ENCODE measurements at regions of chr2 and their contacts with region 1.

Region 1: DNA sequence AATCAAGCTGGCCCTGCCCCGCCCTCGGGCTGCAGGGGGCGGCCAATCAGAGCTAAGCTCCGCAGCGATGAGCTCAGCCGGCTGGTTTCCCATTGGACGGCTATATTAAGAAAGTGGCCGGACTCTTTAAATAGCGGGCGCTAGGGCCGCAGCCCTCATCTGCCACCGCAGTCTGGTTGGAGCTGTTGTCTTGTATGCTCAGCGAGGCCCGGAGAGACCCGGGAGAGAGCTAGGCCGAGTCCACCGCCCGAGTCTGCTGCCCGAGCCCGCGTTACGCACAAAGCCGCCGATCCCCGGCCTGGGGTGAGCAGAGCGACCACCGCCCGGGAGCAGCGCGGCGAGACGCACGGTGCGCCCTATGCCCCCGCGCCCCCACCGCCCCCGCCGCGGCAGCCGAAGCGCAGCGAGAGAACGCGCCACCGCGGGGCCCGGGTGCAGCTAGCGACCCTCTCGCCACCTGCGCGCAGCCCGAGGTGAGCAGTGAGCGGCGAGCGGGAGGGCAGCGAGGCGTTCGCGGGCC is at the start of gene RHOB:
- DNase-seq: peak; percentile 96 to 98
- H3K4me3 ChIP-seq: peak within 1 kb of the TSS; percentile 97
- H3K27ac ChIP-seq: peak within 1 kb of the TSS; percentile 69
- H3K4me1 ChIP-seq: peaks cover 52% of the 10 kb centered on the region
- H3K27me3 ChIP-seq: no peaks in the 10 kb centered on the region
- CTCF ChIP-seq: no peak
- total RNA-seq, gene RHOB: 39.3 and 44.4 TPM in 2 replicates

Region 2: DNA sequence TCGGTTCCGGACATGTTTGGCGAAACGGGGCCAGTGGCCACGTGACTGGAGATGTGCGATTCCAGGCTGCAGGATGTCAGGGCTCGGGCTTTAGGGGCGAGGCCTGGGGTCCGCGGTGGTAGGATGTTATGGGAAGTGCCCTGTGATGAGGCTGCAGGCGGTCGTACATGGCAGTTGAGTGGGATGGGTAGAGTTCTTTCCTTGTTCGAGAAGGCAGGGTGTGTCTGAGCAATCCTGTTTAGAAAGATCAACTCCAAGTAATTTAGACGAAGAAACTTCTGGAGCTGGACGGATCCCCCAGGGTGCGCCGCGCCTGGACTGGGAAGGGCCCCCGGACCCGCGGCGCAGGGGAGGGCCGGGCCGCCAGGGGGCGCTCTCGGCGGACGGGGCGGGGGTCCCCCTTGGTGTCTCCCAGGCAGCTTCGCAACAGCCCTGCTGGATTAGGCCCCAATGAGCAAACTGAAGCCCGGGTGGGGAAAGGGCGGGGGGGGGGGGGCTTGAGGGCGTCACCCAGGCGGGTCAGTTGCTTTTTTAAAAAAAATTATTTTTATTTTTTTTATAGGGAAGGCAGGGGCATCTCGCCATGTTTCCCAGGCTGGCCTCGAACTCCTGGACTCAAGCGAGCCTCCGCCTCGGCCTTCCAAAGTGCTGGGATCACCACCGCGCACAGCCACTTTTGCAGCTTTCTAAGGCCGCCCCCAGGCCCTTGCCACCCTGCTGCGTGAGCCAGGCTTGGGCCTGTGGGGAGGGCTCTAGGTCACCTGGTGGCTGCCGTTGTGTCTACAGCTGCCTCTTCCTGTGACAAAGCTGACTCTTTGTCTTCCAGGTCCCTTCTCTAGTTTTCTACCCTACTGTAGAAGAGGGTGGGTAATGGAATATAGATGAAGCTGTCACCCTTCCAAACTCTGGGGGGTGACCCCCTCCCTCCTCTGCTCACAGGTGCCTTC is 204.6 kb before region 1 on chr2:
- CTCF ChIA-PET with region 1: no interaction called
- POLR2A ChIA-PET with region 1: no interaction called
- intact Hi-C with region 1: no loop called
- DNase-seq: no peak
- H3K4me3 ChIP-seq: no peak overlapping the region
- H3K27ac ChIP-seq: no peak overlapping the region
- H3K4me1 ChIP-seq: no peaks in the 10 kb centered on the region
- H3K27me3 ChIP-seq: no peaks in the 10 kb centered on the region
- CTCF ChIP-seq: no peak

Region 3: DNA sequence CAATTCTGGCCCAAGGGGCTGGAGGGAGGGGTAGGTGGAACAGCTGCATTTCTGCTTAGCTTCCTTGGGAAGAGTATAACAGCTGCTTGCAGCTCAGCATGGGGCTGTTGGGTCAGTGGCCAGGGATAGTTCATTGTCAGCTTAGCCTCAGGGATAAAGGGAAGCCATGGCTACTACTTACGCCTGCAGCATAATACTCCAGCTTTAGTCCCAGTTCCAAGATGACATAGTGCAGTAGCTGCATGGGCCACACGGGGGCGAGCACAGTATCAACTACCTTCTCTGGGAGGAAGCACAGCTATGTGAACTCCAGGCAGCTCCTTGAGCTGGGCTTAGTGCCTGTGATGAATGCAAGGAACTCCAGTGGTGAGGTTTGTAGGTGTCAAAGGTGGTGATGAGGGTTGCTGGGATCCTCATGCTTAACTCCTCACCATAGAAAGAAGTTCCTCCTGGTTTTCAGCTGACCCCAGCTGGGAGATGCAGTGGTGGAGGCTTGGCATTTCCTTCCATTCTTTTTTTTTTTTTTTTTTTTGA is 35.5 kb before region 1 on chr2:
- CTCF ChIA-PET with region 1: interaction called, 13 read pairs
- POLR2A ChIA-PET with region 1: interaction called, 8 read pairs
- intact Hi-C with region 1: loop called (anchors 1 kb)
- DNase-seq: peak; percentile 68 to 83
- H3K4me3 ChIP-seq: no peak overlapping the region
- H3K27ac ChIP-seq: no peak overlapping the region
- H3K4me1 ChIP-seq: no peaks in the 10 kb centered on the region
- H3K27me3 ChIP-seq: no peaks in the 10 kb centered on the region
- CTCF ChIP-seq: peak; percentile 92

Region 4: DNA sequence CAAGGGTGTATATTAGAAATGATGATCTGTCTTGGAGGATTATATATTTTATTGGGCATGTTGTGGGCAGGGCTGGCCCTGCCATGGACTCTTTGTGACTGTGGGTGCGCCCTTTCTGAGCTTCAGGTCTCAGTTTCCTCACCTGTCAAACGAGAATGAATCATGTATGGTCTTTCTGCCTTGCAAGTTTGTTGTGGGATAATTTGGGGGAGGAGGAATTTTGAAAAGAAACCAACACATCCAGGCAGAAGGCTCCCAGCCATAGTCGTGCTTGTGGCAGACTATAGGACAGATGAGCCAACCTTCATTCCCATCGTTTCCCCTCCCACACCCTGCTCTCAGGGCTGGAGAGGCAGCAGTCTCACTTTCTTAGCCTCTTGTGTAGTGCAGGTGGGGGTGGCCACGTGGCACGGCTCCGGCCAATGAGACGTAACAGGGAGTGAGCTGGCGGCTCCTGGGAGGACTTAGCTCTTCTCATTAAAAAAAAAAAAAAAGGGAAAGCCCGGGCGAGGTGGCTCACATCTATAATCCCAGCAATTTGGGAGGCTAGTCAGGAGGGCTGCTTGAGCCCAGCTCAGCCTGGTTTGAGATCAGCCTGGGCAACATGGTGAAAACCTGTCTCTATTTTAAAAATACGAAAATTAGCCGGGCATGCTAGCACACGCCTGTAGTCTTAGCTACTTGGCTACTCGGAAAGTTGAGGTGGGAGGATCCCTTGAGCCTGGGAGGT is 63.0 kb after region 1 on chr2:
- CTCF ChIA-PET with region 1: no interaction called
- POLR2A ChIA-PET with region 1: interaction called, 27 read pairs
- intact Hi-C with region 1: loop called (anchors 5 kb)
- DNase-seq: peak; percentile 37 to 76
- H3K4me3 ChIP-seq: no peak overlapping the region
- H3K27ac ChIP-seq: no peak overlapping the region
- H3K4me1 ChIP-seq: peaks cover 10% of the 10 kb centered on the region
- H3K27me3 ChIP-seq: no peaks in the 10 kb centered on the region
- CTCF ChIP-seq: no peak

Region 5: DNA sequence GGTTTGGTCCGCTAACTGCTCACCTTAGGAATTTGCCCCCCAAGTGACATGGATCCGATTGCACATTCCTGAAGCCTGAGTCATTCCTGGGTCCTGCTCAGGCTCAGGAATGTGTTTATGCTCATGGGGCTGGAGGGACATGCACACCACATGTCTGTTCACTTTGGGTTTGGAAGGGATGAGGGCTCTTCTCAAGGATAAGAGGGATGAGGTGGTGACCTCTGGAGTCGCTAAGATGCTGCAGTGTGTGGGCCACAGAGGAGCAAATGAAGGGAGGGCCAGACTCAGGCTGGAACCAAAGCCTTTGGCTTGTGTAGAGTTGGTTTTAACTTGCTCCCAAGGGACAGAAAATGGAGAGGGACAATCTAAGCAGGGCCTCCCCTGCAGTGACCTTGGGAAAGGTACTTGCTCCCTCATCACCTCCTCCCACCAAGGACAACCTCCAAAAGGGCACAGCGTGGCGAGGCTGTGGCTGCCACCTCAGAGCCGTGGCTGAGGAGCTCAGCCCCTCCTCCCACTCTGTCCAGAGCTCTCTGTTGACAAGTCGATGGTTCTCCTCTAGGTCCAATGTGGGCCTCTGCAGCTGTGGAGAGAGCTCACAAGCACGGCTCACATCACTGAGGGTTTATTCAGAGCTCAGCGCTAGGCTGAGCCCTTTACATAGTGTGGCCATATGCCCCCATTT is 137.8 kb after region 1 on chr2:
- CTCF ChIA-PET with region 1: interaction called, 4 read pairs
- POLR2A ChIA-PET with region 1: interaction called, 15 read pairs
- intact Hi-C with region 1: loop called (anchors 2 kb)
- DNase-seq: peak in 1 of 2 experiments; percentile 95
- H3K4me3 ChIP-seq: no peak overlapping the region
- H3K27ac ChIP-seq: peak overlapping the region; percentile 65
- H3K4me1 ChIP-seq: peaks cover 47% of the 10 kb centered on the region
- H3K27me3 ChIP-seq: no peaks in the 10 kb centered on the region
- CTCF ChIP-seq: no peak

Region 6: GRCh38 chr2:20617892-20618467 is 171.0 kb after region 1 on chr2:
- CTCF ChIA-PET with region 1: interaction called, 18 read pairs
- POLR2A ChIA-PET with region 1: interaction called, 15 read pairs
- intact Hi-C with region 1: no loop called
- DNase-seq: peak; percentile 92 to 95
- H3K4me3 ChIP-seq: no peak overlapping the region
- H3K27ac ChIP-seq: peak overlapping the region; percentile 72
- H3K4me1 ChIP-seq: peaks cover 60% of the 10 kb centered on the region
- H3K27me3 ChIP-seq: no peaks in the 10 kb centered on the region
- CTCF ChIP-seq: peak; percentile 47; the same call in 1 of the 2 replicates

Measured in PC-9 (cell line).